Activated B cell treated with CpG ODN at 0.5 μM for 24 hours (primary cell): ENCODE measurements at regions of chr2 and their contacts with region 1.

Region 1: DNA sequence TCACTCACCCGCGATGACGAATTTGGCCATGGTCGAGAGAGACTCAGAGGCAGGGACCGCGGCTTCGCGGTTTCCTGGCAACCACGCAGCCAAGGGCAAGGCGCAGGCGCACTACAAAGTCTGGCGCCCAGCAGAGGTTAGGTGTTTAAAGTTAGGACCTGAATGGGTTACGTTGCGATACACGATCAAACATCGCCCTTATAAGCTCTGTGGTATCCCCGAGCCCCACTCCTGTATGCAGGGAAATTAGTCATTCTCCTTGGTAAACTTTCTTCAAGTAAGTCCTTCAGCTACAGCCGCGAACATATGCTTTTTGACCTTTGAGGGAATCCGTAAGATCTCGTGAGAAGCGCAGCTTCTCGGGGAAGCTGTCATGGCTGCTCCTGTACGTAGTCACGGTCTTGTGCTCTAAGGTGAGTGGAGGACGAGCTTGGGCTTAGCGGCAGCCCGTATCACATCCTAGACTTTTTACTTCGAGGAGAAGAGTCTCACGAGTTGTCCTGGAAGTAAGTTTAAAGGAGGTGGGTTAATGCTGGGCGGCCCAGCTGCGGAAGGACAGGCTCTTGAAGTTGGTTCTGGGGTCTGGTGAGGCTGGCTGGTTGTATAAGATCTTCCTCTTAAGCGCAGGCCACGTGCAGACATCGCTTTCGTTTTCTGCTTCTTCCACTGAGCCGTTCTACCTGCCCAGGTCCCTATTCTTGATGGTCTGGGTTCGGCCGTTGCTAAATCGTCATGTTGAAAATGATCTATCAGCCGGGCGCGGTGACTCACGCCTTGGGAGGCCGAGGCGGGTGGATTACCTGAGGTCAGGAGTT is at the starts of genes FASTKD2 and MDH1B:
- DNase-seq: peak; percentile 77
- ATAC-seq: peak; percentile 87
- H3K4me3 Mint-ChIP-seq: peak within 1 kb of the TSS; percentile 94
- H3K27ac Mint-ChIP-seq: peak within 1 kb of the TSS; percentile 96
- H3K4me1 Mint-ChIP-seq: peaks cover 34% of the 10 kb centered on the region
- H3K27me3 Mint-ChIP-seq: peaks cover 3% of the 10 kb centered on the region
- CTCF ChIP-seq: no peak
- total RNA-seq, gene FASTKD2: 29.1 and 29.6 TPM in 2 replicates
- total RNA-seq, gene MDH1B: not detected in 2 replicates

Region 2: DNA sequence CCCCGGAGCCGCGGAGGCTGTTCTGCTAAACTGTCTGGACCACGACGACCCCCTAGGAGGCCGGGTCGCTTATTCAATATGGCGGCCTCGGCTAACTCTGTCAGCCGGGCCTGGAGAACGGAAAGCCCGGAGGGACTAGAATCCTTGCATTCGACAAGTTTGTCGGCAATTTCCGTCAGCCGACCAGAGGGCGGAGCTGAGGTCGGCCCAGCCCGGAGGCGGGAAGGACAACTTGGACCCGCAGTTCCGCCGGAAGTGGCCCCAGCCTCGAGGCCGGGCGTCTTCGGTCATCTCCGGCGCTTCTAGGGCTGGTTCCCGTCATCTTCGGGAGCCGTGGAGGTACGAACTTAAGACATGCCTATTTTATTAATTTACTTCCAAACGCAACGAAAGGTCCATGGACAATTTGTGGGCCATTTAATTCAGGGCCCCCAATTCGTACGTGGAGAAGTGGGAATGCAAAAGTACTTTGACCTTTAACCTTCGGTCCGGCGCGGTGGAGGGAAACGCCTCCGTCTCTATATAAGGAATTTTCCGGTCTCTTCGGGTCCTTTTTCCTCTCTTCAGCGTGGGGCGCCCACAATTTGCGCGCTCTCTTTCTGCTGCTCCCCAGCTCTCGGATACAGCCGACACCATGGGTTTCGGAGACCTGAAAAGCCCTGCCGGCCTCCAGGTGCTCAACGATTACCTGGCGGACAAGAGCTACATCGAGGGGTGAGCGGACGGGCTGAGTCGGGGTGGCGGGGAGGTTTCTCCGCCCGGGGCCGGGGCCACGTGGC is 605.9 kb before region 1 on chr2 and contains the starts of genes EEF1B2 and NDUFS1:
- CTCF ChIA-PET with region 1: no interaction called
- POLR2A ChIA-PET with region 1: interaction called, 4 read pairs
- intact Hi-C with region 1: loop called (anchors 1 kb)
- DNase-seq: peak; percentile 90
- ATAC-seq: peak; percentile 88
- H3K4me3 Mint-ChIP-seq: peak within 1 kb of the TSS; percentile 99
- H3K27ac Mint-ChIP-seq: peak within 1 kb of the TSS; percentile 97
- H3K4me1 Mint-ChIP-seq: peaks cover 56% of the 10 kb centered on the region
- H3K27me3 Mint-ChIP-seq: no peaks in the 10 kb centered on the region
- CTCF ChIP-seq: no peak
- total RNA-seq, gene EEF1B2: 1,278 and 1,486 TPM in 2 replicates
- total RNA-seq, gene NDUFS1: 47.3 and 50.1 TPM in 2 replicates

Region 3: DNA sequence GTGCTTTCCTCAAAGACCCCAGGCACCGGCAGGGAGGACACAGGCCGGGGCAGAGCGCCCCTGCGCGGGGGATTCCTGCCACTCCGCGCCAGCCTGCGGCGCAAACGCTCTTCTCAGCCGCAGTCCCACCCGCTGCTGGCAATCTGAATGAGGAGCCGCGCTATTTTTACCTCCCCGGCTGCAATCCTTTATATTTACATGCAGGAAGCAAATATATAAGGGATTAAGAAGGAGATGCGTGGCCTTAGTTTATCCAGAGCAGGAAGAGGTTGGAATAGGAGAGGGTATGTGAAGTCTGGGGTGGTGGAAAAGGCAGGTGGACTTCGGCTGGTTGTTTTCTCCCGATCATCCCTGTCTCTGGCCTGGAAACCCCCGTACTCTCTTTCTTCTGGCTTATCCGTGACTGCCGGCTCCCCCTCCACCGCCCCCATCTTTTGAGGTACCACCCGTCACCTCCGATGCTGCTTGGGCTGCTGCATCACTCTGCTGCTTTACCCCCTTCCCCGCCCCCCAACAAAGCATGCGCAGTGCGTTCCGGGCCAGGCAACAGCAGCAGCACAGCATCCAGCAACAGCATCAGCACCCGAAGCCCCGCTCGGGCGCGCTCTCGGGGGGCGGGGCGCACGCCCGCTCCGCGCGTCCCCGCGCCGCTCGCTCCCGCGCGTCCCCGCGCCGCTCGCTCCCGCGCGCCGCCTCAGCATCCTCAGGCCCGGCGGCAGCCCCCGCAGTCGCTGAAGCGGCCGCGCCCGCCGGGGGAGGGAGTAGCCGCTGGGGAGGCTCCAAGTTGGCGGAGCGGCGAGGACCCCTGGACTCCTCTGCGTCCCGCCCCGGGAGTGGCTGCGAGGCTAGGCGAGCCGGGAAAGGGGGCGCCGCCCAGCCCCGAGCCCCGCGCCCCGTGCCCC is 322.4 kb before region 1 on chr2 and contains the start of gene ADAM23:
- CTCF ChIA-PET with region 1: no interaction called
- POLR2A ChIA-PET with region 1: no interaction called
- intact Hi-C with region 1: loop called (anchors 2 kb)
- DNase-seq: peak; percentile 37
- ATAC-seq: peak; percentile 66
- H3K4me3 Mint-ChIP-seq: peak within 1 kb of the TSS; percentile 80
- H3K27ac Mint-ChIP-seq: no peak within 1 kb of the TSS
- H3K4me1 Mint-ChIP-seq: peaks cover 16% of the 10 kb centered on the region
- H3K27me3 Mint-ChIP-seq: peaks cover 50% of the 10 kb centered on the region
- CTCF ChIP-seq: no peak
- total RNA-seq, gene ADAM23: 0.86 and 1.5 TPM in 2 replicates

Region 4: DNA sequence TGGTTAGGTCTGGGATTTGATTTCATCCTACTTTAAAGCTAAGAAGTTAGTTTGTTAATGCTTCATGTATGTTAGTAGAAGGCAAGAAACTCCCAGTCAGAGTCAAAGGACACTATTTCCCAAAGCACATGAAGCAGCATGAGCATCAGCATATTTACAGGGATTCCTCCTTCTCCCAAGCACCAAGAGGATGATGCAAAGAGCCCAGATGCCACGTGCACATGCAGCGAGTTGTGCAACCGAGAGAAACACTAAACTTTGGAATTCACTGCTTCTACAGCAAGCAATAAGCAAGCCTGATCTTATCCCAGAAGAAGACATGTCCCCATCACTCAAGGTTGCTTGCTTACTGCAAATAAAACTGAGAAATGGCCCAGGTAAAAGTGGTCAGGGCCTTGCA is 206.4 kb after region 1 on chr2:
- CTCF ChIA-PET with region 1: no interaction called
- POLR2A ChIA-PET with region 1: no interaction called
- intact Hi-C with region 1: no loop called
- DNase-seq: no peak
- ATAC-seq: no peak
- H3K4me3 Mint-ChIP-seq: no peak overlapping the region
- H3K27ac Mint-ChIP-seq: no peak overlapping the region
- H3K4me1 Mint-ChIP-seq: no peaks in the 10 kb centered on the region
- H3K27me3 Mint-ChIP-seq: peaks cover 17% of the 10 kb centered on the region
- CTCF ChIP-seq: no peak

Region 5: DNA sequence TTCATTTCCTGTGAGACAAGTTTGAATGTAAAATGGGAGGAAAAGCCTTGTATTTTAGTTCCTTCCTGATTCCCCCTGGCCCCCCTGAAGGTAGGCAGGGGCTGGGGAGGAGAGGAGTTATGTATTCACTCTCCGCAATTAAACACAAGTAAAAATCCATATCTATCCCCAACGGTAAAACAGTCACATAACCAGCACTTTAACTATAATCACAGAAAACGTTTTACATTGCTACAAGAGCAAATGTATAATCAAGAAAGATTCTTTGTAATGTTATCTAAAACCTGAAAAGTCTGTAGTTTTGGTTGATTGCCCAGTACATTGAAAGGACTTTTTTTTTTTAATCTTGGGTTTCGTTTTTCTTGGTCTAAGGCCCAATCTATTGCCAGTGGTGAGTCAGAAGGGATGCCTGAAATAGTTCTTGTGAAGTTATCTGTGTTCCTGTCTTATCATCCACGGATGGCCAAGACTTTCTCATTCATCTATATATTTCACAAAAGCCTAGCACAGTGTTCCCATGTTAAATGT is 911.4 kb after region 1 on chr2:
- CTCF ChIA-PET with region 1: no interaction called
- POLR2A ChIA-PET with region 1: interaction called, 10 read pairs
- intact Hi-C with region 1: no loop called
- DNase-seq: no peak
- ATAC-seq: no peak
- H3K4me3 Mint-ChIP-seq: no peak overlapping the region
- H3K27ac Mint-ChIP-seq: no peak overlapping the region
- H3K4me1 Mint-ChIP-seq: peaks cover 3% of the 10 kb centered on the region
- H3K27me3 Mint-ChIP-seq: peaks cover 3% of the 10 kb centered on the region
- CTCF ChIP-seq: no peak

Region 6: GRCh38 chr2:207983641-207984042 is 1218.2 kb after region 1 on chr2:
- CTCF ChIA-PET with region 1: no interaction called
- POLR2A ChIA-PET with region 1: no interaction called
- intact Hi-C with region 1: loop called (anchors 1 kb)
- DNase-seq: peak; percentile 23
- ATAC-seq: peak; percentile 88
- H3K4me3 Mint-ChIP-seq: peak overlapping the region; percentile 70
- H3K27ac Mint-ChIP-seq: peak overlapping the region; percentile 94
- H3K4me1 Mint-ChIP-seq: peaks cover 37% of the 10 kb centered on the region
- H3K27me3 Mint-ChIP-seq: no peaks in the 10 kb centered on the region
- CTCF ChIP-seq: no peak

Region 7: DNA sequence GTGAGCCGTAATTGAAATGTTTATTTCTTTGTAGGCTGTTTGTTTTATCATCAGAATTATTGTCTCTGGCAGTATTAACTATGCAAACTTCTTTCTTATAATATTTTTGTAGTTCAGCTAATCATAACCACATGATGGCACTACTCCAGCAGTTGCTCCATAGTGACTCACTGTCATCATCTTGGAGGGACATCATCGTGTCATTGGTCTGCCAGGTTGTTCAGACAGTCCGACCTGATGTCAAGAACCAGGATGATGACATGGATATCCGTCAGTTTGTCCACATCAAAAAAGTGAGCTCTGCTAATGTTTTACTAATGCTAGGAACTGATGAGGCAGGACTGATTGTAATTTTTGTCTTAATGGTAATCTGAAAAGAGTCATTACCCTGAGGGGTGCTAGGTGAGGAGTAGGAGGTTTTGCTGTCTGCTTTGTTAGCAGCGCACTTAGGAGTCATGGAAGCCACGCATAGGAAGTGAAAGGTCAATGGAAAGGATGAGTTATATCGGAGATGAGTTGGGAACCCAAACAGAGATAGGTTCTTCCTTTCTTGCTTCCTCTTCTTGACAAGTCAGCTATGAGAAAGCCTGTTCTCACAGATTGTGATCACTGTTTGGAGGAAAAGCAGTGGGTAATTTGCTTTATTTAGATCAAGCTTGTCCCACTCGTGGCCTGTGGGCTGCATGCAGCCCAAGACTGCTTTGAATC is 1549.8 kb after region 1 on chr2:
- CTCF ChIA-PET with region 1: no interaction called
- POLR2A ChIA-PET with region 1: interaction called, 3 read pairs
- intact Hi-C with region 1: loop called (anchors 5 kb)
- DNase-seq: no peak
- ATAC-seq: peak; percentile 54
- H3K4me3 Mint-ChIP-seq: peak overlapping the region; percentile 89
- H3K27ac Mint-ChIP-seq: peak overlapping the region; percentile 93
- H3K4me1 Mint-ChIP-seq: peaks cover 77% of the 10 kb centered on the region
- H3K27me3 Mint-ChIP-seq: no peaks in the 10 kb centered on the region
- CTCF ChIP-seq: no peak